ENCODE measurements at regions of chr1 and their contacts with region 1.

Region 1: DNA sequence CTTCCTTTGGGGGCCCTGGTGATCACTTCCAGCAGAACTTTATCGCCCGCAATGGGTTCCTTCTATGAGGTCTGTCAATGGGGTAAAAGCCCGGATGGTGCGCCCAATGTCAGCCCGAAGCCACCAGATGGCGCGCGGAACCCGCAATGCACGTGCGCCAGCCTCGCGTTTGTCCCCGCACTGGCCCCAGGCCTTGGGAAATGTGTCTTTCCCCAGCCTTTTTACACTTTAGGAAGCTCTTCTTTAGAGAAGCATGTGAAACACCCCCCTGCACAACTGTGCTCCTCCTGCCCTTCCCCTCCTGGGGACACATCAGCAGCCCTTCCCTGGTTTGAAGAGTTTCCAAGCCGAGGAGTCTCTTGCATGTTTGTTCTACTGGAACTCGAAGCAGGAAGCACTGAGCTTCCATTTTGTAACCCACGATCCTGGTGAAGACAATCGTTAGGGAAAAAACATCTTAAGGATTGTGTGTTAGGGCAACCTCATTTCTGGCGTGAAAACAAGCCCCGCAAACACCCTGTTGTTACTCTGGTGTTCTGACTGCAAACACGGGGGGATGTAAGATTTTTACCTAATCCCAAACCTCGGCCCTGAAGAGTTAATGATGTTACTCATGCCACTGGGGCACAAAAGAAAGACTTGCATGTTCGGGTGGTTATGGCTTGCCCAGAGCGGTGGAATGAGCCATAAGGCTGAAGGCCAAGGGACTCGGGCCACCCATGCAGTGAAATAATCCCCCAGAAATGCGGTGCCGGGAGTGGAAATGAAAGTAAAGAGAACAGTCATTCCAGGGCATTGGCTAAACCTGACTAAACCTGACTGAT is 20.4 kb upstream of the TARBP1 start:
- DNase-seq: peak; percentile 90
- H3K4me3 Mint-ChIP-seq: peak overlapping the region; percentile 34
- H3K27ac Mint-ChIP-seq: peak overlapping the region; percentile 85
- H3K4me1 Mint-ChIP-seq: peaks cover 71% of the 10 kb centered on the region
- H3K27me3 Mint-ChIP-seq: peaks cover 4% of the 10 kb centered on the region

Region 2: DNA sequence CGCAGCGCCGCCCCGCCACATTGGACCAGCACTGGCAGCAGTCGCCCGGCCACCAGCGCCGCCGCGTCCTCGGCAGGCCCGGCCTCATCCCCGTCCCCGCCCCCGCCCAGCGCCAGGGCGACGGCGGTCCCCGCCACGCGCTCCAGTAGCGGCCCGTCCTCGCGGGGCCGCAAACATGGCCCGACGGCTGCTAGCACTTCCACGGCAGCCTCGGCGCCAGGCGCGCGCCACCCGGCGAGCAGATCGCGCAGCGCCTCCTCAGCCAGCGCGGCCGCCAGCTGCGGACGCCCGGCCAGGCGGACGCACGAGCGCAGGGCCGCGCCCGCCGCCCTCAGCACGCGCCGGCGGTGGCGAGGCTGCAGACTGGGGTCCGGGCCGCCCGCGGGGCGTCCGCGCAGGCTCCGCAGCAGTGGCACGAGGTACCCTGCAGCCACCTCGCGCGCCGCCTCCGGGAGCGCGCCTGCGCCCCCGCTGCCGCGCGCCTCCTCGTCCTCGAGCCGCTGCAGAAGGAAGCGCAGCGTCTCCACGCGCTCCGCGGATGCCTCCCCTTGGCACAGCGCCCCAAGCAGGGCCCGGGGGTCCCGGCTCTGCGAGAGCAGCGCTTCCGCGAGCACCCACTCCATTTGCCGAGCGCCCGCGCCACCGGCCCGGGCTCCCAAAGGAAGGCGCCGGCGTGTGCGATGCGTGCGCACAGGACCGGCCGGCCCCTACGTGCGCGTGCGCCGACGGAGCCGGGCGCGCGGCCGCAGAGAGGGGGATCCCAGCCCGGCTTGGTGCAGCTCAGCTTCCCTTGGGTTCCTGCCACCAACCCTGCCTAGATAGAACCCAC is 20.6 kb before region 1 on chr1 and contains the start of gene TARBP1:
- CTCF ChIA-PET with region 1: interaction called, 3 read pairs
- POLR2A ChIA-PET with region 1: interaction called, 5 read pairs
- intact Hi-C with region 1: loop called (anchors 2 kb)
- DNase-seq: peak; percentile 82
- H3K4me3 Mint-ChIP-seq: peak within 1 kb of the TSS; percentile 80
- H3K27ac Mint-ChIP-seq: peak within 1 kb of the TSS; percentile 65
- H3K4me1 Mint-ChIP-seq: peaks cover 39% of the 10 kb centered on the region
- H3K27me3 Mint-ChIP-seq: peaks cover 14% of the 10 kb centered on the region
- total RNA-seq, gene TARBP1: 28.9 to 30.1 TPM

Region 3: GRCh38 chr1:234544087-234544579 is 44.8 kb after region 1 on chr1:
- CTCF ChIA-PET with region 1: interaction called, 10 read pairs
- POLR2A ChIA-PET with region 1: no interaction called
- intact Hi-C with region 1: loop called (anchors 5 kb)
- DNase-seq: peak; percentile 76
- H3K4me3 Mint-ChIP-seq: no peak overlapping the region
- H3K27ac Mint-ChIP-seq: peak overlapping the region; percentile 61
- H3K4me1 Mint-ChIP-seq: peaks cover 24% of the 10 kb centered on the region
- H3K27me3 Mint-ChIP-seq: no peaks in the 10 kb centered on the region

Region 4: GRCh38 chr1:234730770-234731568 is 231.6 kb after region 1 on chr1:
- CTCF ChIA-PET with region 1: interaction called, 3 read pairs
- POLR2A ChIA-PET with region 1: interaction called, 3 read pairs
- intact Hi-C with region 1: loop called (anchors 1 kb)
- DNase-seq: peak; percentile 78
- H3K4me3 Mint-ChIP-seq: peak overlapping the region; percentile 40
- H3K27ac Mint-ChIP-seq: peak overlapping the region; percentile 99
- H3K4me1 Mint-ChIP-seq: peaks cover 77% of the 10 kb centered on the region
- H3K27me3 Mint-ChIP-seq: no peaks in the 10 kb centered on the region

Region 5: GRCh38 chr1:234925440-234926263 is 426.3 kb after region 1 on chr1:
- CTCF ChIA-PET with region 1: no interaction called
- POLR2A ChIA-PET with region 1: interaction called, 3 read pairs
- intact Hi-C with region 1: loop called (anchors 2 kb)
- DNase-seq: peak; percentile 46
- H3K4me3 Mint-ChIP-seq: peak overlapping the region; percentile 66
- H3K27ac Mint-ChIP-seq: peak overlapping the region; percentile 98
- H3K4me1 Mint-ChIP-seq: peaks cover 54% of the 10 kb centered on the region
- H3K27me3 Mint-ChIP-seq: no peaks in the 10 kb centered on the region

Region 6: DNA sequence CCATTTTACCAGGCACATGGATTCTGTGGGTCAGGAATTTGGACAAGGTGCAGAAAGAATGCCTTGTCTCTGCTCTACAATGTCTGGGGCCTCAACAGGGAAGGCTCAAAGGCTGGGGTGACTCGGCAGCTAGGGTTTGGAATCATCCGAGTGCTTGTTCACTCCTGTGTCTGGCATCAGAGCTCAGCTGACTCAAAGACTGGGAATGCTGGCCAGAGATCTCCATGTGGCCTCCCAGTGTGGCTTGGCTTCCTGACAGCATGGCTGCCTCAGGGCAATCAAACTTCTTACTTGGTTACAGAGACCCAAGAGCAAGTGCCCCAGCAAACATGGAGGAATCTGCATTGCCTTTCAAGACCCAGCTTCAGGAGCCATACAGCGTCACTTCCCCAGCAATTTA is 518.8 kb after region 1 on chr1:
- CTCF ChIA-PET with region 1: interaction called, 5 read pairs
- POLR2A ChIA-PET with region 1: no interaction called
- intact Hi-C with region 1: loop called (anchors 1 kb)
- DNase-seq: no peak
- H3K4me3 Mint-ChIP-seq: no peak overlapping the region
- H3K27ac Mint-ChIP-seq: peak overlapping the region; percentile 66
- H3K4me1 Mint-ChIP-seq: peaks cover 74% of the 10 kb centered on the region
- H3K27me3 Mint-ChIP-seq: no peaks in the 10 kb centered on the region

Region 7: DNA sequence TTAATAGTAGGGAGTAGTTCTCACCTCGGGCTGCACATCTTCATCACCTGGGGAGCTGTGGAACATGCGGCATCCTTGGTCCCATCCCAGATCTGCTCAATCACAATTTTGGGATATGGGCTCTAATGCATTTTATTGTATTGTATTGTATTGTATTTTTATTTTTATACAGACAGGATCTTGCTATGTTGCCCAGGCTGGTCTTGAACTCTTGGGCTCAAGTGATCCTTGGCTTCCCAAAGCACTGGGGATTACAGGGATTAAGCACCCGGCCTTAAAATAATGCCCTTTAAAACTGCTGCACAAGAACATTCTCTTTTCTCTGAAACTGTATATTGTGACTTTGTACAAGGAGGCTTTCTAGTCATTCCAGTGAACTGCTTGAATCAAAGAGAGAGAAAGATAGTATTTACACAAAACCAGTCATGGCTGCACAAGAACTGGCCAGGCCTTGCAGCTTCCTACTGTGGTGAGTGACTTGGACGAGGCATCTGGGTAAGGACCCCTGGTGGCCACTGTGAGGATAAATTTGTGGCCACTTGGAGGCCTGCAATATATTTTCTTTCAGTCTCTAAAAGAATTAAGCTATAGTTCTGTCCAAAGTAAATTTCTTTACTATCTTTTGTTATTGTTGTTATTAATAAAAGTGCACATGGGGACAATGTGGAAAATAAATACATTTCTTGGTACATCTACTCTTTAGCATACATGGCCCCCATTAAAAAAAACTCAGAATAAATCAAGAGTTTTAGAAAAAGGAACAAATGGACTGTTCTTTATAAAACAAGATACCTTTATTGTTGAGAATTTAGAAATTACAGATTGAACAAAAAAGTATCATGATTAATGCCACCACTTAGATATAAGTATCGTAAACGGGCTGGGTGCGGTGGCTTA is 915.9 kb after region 1 on chr1:
- CTCF ChIA-PET with region 1: no interaction called
- POLR2A ChIA-PET with region 1: no interaction called
- intact Hi-C with region 1: loop called (anchors 5 kb)
- DNase-seq: peak; percentile 74
- H3K4me3 Mint-ChIP-seq: no peak overlapping the region
- H3K27ac Mint-ChIP-seq: no peak overlapping the region
- H3K4me1 Mint-ChIP-seq: peaks cover 2% of the 10 kb centered on the region
- H3K27me3 Mint-ChIP-seq: no peaks in the 10 kb centered on the region